A549 (cell line): ENCODE measurements at regions of chr2 and their contacts with region 1.

Region 1: DNA sequence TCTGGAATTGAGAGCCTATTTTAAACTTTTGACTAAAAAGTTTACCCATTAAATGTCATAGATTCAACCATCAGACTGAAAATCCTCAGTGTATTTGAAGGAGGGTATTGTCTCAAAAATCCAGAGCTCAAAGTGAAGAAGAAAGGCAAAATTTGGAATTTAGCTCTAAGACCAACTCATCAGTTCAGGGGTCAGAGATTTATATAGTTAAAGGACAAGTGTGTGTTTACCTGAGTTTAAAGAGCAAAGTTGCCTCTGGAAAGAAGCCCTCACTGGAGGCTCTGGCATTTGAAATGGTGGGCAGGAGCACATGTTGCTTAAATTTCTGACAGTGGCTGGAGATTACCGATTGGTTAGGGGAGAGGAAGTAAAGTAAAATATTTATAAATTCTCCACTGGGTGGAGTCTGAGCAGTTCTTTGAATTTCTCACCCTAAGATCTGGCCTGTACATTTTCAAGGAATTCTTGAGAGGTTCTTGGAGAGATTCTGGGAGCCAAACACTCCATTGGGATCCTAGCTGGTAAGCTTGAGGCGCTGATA is at the start of gene KYNU:
- DNase-seq: peak in 1 of 2 experiments; percentile 92
- ATAC-seq: peak; percentile 8 to 64; a peak in 4 of 6 replicates
- H3K4me3 ChIP-seq: peak within 1 kb of the TSS; percentile 63
- H3K27ac ChIP-seq: peak within 1 kb of the TSS; percentile 98 to 99
- H3K4me1 ChIP-seq: peaks cover 54% of the 10 kb centered on the region
- CTCF ChIP-seq: peak; percentile 22; the same call in 1 of the 3 replicates
- EP300 ChIP-seq: no peak
- POLR2A ChIP-seq: no peak
- RAD21 ChIP-seq: peak; percentile 35 to 49; a peak in 3 of 5 replicates
- polyA plus RNA-seq, gene KYNU: 310 and 324 TPM in 2 replicates

Region 2: DNA sequence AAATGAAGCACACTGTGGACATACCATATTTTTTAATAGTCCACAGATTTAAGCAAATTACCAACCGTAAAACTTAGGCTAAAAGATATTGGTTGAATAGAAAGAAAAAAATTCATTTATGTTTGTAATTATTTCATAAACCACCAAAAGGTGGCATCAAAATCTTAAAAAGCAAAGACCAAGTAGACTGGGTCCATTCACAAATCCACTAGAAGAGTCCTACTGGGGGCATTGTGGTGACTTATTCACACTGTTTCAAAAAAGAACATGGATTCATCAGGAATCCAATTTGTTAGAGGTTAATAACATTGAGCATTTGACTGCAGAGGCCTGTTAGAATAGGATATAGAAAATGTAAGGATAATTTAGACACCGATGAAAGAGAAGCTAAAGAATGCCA is 194.8 kb before region 1 on chr2:
- CTCF ChIA-PET with region 1: interaction called, 23 read pairs
- POLR2A ChIA-PET with region 1: no interaction called
- DNase-seq: peak; percentile 13 to 77
- ATAC-seq: peak; percentile 66 to 87; a peak in 3 of 6 replicates
- H3K4me3 ChIP-seq: no peak overlapping the region
- H3K27ac ChIP-seq: peak overlapping the region; percentile 72 to 74
- H3K4me1 ChIP-seq: peaks cover 24% of the 10 kb centered on the region
- CTCF ChIP-seq: peak; percentile 85
- EP300 ChIP-seq: no peak
- POLR2A ChIP-seq: no peak
- RAD21 ChIP-seq: peak; percentile 86 to 96

Region 3: DNA sequence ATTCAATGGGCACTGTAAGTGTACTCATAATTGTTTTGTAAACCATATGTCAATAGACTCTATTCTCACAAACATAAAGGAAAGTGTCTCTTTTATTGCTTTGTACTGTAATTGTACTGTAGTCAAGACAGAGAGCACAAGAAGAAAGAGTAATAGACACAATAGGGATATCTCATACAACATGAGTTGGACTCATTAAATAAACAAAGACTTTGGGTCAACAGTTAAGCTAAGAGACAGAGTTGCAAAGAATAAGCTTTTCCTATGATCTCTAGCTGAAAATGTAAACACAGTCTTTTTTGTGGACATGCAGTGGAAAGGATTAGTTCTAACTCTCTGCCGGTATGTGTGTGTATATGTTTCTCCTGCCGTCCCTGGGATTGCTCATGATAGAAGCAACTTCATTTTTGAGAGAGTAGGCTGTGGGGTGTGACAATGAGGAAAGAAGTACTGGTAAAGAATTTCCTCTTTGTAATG is 13.8 kb before region 1 on chr2:
- CTCF ChIA-PET with region 1: interaction called, 7 read pairs
- POLR2A ChIA-PET with region 1: interaction called, 11 read pairs
- DNase-seq: peak in 1 of 2 experiments; percentile 86
- ATAC-seq: peak; percentile 60
- H3K4me3 ChIP-seq: no peak overlapping the region
- H3K27ac ChIP-seq: peak overlapping the region; percentile 92 to 99
- H3K4me1 ChIP-seq: peaks cover 83% of the 10 kb centered on the region
- CTCF ChIP-seq: no peak
- EP300 ChIP-seq: peak; percentile 51 to 62; a peak in 2 of 5 replicates
- POLR2A ChIP-seq: no peak
- RAD21 ChIP-seq: no peak; a peak in 1 of 5 replicates